Mammary epithelial cell (primary cell): ENCODE measurements at regions of chr17 and their contacts with region 1.

Region 1: DNA sequence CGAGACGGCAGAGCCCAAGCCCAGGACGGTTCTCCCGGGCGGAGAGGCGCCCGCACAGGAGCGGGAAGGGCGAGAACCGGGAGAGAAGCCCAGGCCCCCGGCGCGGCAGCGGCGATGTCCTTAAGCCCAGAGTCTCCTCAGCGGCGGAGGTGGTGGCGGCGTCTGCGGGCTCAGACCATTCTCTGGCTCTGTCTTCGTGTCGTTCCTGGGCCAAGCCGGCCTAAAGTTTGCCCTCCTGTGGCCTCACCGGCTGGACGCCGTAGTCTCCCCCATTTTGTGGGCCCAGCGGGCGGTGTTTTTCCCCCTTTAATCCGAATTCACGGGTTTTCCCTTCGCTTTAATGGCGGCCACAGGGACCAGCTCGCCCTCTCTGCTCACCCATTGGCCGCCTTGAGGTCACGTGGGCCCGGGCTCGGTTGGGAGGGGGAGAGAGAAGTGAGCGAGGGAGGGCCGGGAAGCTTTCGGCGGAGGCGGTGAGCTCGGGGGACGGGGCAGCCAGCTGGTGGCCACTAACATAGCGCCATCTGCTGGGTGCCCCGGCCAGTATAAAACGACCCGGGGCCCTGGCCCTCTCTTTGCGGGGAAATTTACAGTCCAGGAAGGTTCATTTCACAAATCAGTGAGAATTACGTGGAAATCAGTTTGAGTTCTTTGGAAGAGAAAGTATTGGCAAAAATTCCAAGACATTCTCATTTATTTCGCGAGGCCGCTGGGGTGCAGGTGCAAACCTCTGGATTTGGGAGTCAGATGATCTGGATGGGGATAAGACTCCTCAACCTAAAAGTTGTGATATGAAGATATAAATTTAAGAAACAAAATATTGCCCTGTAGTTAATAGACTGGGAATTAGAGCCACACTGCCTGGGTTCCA is 755 bp upstream of the MED13 start:
- DNase-seq: peak; percentile 97
- H3K4me3 ChIP-seq: peak overlapping the region; percentile 92 to 99 (median 98)
- H3K27ac ChIP-seq: peak overlapping the region; percentile 96
- H3K4me1 ChIP-seq: peaks cover 12% of the 10 kb centered on the region
- H3K27me3 ChIP-seq: no peaks in the 10 kb centered on the region
- CTCF ChIP-seq: peak; percentile 59 to 90

Region 2: DNA sequence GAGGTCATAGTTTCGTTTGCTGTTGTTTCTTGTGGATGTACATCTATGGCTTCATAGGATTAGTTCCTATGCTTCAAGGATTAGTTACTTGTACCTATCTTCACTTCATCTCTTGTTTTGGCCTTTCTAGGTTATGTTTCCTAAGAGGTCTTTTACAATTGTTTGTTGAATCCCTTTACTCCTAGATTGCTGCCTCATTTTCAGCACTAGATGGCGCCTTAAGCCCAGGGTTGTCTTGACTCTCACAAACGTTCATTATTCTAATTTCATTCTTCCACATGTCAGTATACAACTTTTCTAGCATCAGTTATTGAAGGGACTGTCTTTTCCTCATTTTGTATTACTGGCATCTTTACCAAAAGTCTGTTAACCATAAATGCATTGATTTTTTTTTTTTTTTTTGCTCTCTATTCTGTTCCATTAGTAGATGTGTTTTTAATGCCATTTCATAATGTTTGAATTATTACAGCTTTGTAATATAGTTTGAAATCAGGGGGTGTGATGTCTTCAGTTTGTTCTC is 429.9 kb before region 1 on chr17:
- CTCF ChIA-PET with region 1: no interaction called
- dilution Hi-C with region 1: no loop called
- in situ Hi-C with region 1: no loop called
- intact Hi-C with region 1: loop called (anchors 2 kb)
- DNase-seq: peak; percentile 35
- H3K4me3 ChIP-seq: no peak overlapping the region
- H3K27ac ChIP-seq: no peak overlapping the region
- H3K4me1 ChIP-seq: no peaks in the 10 kb centered on the region
- H3K27me3 ChIP-seq: no peaks in the 10 kb centered on the region
- CTCF ChIP-seq: peak; percentile 74 to 81

Region 3: DNA sequence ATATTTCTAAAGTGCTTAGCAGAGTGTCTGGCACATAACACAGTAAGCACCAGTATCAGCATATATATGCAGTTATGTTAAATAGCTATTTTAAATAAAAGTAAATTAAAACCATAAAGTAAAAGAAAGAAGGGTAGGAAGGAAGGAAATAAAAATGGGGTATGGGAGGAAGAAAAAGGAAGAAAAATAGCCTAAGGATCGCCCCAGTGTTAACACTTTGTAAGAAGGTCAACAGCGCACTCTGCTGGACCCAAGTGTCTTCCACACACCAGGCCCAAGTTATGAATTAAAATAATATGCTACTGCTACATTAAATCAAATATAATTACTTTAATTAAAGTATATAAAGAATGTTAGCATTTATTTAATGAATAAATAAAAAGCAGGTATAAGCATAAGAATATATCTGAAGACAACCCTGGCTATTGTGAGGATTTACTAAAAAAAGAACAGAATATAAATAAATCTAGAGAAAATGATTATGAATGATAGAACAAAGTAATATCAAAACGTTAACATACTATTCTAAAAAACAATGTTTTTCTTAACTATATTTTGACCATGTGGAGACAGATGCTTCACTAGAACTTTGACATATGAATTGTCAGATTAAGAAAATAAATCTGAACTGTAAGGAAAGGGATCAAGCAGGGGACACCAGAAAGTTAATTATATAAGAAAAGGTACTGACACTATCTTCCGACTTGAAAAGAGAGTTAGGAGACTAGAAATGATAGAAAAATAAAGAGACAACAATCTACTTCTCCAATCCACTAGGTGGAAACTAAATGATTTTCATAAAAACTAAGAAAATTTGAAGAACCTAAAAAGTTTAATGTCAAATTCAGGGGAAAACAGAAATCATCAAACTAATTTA is 228.4 kb before region 1 on chr17:
- CTCF ChIA-PET with region 1: no interaction called
- dilution Hi-C with region 1: no loop called
- in situ Hi-C with region 1: no loop called
- intact Hi-C with region 1: loop called (anchors 10 kb)
- DNase-seq: peak; percentile 37
- H3K4me3 ChIP-seq: no peak overlapping the region
- H3K27ac ChIP-seq: no peak overlapping the region
- H3K4me1 ChIP-seq: peaks cover 17% of the 10 kb centered on the region
- H3K27me3 ChIP-seq: no peaks in the 10 kb centered on the region
- CTCF ChIP-seq: peak; percentile 70 to 83

Region 4: DNA sequence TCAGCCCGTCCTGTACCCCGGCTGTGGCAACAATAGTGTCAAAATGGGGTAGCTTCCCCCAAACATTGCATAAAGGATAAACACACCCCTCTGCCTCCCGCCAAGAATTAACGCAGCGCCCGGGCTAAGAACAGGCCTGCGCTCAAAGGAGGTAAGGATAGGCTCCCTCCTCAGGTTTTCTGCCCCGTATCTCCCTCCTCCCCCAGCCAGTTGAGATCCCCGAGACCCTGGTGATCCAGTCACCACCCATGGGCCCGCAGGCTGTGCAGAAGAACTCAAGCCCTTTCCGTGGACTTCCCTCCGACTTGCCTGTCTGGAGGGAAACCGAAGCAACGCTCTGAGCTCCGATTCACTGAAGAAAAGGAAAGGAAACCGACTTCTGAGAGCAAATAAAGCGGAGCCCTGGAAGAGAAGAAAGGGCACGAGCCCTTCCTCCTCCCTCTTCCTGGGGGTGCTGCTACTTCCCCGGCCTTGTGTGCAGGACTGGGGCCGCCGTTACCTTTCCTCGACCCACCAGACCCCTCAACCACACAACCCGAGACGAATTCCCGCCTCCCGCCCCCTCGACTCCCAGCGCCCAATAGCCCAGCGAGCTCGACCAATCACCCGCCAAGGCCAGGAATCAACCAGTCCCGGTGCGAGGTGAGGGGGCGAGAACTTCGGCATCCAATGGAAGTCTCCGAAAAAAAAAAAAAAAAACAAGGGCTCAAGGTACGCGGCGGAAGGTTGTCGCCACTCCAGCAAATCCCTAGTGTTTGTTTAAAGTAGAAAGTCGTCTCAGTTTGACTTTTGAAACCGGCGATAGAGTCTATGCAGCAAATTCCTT is 202.6 kb before region 1 on chr17 and contains the start of gene BRIP1:
- CTCF ChIA-PET with region 1: no interaction called
- dilution Hi-C with region 1: no loop called
- in situ Hi-C with region 1: no loop called
- intact Hi-C with region 1: loop called (anchors 10 kb)
- DNase-seq: peak; percentile 95
- H3K4me3 ChIP-seq: peak within 1 kb of the TSS; percentile 68 to 81 (median 73)
- H3K27ac ChIP-seq: peak within 1 kb of the TSS; percentile 91
- H3K4me1 ChIP-seq: peaks cover 9% of the 10 kb centered on the region
- H3K27me3 ChIP-seq: no peaks in the 10 kb centered on the region
- CTCF ChIP-seq: no peak
- total RNA-seq, gene BRIP1: 10.2 to 13.2 TPM

Region 5: DNA sequence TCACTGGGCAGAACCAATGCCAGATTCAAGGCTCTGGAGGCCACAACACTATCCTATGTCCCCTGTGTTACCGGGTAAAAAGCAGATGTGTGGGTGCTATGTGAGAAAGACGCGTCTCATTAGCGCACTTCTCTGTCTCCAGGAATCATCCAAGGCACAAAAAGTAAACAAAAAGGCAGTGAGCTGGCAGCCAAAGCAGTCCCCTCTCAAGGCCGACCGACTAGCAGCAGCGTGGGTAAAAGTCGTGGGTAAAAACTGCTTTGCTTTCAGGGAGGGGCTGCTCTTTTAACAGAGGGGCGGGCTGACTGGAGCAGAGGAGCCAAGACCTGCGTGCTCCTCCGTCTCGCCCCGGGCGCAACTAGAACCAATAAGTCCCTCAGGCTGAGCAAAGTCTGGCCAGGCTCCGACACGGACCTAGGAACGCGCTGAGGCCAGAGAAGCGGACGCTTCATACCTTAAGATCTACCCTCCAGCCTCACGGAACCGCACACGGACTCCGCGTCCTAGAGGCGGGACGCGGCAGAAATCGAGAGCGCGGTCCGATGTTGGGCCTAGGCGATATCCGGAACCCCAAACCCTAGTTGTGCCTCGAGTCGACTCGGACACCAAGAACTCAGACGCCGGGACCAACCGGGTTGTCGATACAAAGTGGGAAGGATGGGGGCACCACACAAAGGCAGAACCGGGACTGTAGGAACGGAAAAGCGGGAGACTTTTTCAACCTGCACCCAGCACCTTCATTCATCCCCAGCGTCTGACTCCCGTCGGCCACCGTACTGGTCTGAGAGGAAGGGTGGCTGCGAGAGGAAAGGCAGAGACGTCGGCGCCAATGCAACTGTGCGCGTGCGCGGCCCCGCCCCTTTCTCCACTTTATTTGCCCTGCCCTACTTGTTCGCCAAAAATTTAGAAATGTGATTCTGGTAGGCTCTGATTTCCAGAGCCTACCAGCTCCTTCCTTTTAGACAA is 138.3 kb before region 1 on chr17 and contains the start of gene INTS2:
- CTCF ChIA-PET with region 1: no interaction called
- dilution Hi-C with region 1: no loop called
- in situ Hi-C with region 1: no loop called
- intact Hi-C with region 1: loop called (anchors 1 kb)
- DNase-seq: peak; percentile 92
- H3K4me3 ChIP-seq: peak within 1 kb of the TSS; percentile 65 to 79 (median 65)
- H3K27ac ChIP-seq: peak within 1 kb of the TSS; percentile 63
- H3K4me1 ChIP-seq: peaks cover 14% of the 10 kb centered on the region
- H3K27me3 ChIP-seq: no peaks in the 10 kb centered on the region
- CTCF ChIP-seq: no peak
- total RNA-seq, gene INTS2: 14.4 to 20.3 TPM

Region 6: GRCh38 chr17:62093188-62094155 is 27.6 kb after region 1 on chr17:
- CTCF ChIA-PET with region 1: no interaction called
- dilution Hi-C with region 1: no loop called
- in situ Hi-C with region 1: no loop called
- intact Hi-C with region 1: loop called (anchors 2 kb)
- DNase-seq: peak; percentile 96
- H3K4me3 ChIP-seq: no peak overlapping the region
- H3K27ac ChIP-seq: peak overlapping the region; percentile 64
- H3K4me1 ChIP-seq: peaks cover 35% of the 10 kb centered on the region
- H3K27me3 ChIP-seq: no peaks in the 10 kb centered on the region
- CTCF ChIP-seq: no peak